Breast epithelium (tissue), 4 donors: ENCODE measurements at regions of chr12 and their contacts with region 1.

Region 1: GRCh38 chr12:130677957-130678558 is 38.0 kb downstream of the RIMBP2 start:
- DNase-seq: no peak
- H3K4me3 ChIP-seq: no peak overlapping the region
- H3K27ac ChIP-seq: no peak overlapping the region
- H3K4me1 ChIP-seq: no peaks in the 10 kb centered on the region
- H3K27me3 ChIP-seq: no peaks in the 10 kb centered on the region
- CTCF ChIP-seq: no peak
- POLR2A ChIP-seq: no peak

Region 2: DNA sequence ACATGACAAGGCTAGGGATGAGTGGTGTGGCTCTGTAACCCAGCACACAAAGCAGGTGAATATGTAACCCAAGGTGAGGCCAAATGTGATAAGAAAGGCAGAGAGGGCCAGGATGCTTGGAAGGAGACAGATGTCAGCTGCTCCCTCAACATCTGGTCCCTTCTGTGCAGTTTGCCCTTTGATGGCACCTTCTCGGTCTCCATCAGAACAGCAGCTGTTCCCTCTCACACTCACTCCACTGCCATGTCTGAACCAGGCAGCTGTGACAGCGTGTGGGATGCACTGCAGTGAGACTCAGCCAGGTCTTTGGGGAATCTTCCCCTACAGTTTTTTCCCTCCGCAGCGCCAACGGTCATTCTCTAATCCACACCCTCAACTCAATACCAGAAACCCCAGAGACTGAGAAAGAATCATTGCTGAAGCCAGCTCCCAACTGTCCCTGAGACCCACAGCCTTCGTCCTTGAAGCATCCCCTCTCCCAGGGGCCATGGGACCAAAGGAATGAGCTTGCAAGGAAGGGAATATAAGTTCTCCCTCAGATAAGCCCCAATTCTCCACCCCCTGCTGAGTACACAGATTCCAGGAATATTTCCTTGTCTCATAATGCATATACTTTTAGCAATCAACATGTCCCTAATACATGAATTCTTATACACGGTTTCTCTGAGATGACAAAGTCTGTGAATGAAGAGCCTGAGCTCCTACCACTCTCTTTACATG is 1594.8 kb before region 1 on chr12:
- intact Hi-C with region 1: loop called (anchors 10 kb)
- DNase-seq: no peak
- H3K4me3 ChIP-seq: no peak overlapping the region
- H3K27ac ChIP-seq: no peak overlapping the region
- H3K4me1 ChIP-seq: no peaks in the 10 kb centered on the region
- H3K27me3 ChIP-seq: no peaks in the 10 kb centered on the region
- CTCF ChIP-seq: no peak
- POLR2A ChIP-seq: no peak